Activated CD8-positive, alpha-beta T cell treated with anti-CD3 and anti-CD28 coated beads for 36 hours (primary cell): ENCODE measurements at regions of chr22 and their contacts with region 1.

Region 1: GRCh38 chr22:30289134-30289979 is at the start of gene CASTOR1:
- DNase-seq: peak; percentile 90
- ATAC-seq: peak; percentile 86
- H3K4me3 Mint-ChIP-seq: peak within 1 kb of the TSS; percentile 76
- H3K27ac Mint-ChIP-seq: peak within 1 kb of the TSS; percentile 76
- H3K4me1 Mint-ChIP-seq: peaks cover 22% of the 10 kb centered on the region
- H3K27me3 Mint-ChIP-seq: no peaks in the 10 kb centered on the region
- CTCF ChIP-seq: no peak
- total RNA-seq, gene CASTOR1: 4.2 to 5.1 TPM

Region 2: DNA sequence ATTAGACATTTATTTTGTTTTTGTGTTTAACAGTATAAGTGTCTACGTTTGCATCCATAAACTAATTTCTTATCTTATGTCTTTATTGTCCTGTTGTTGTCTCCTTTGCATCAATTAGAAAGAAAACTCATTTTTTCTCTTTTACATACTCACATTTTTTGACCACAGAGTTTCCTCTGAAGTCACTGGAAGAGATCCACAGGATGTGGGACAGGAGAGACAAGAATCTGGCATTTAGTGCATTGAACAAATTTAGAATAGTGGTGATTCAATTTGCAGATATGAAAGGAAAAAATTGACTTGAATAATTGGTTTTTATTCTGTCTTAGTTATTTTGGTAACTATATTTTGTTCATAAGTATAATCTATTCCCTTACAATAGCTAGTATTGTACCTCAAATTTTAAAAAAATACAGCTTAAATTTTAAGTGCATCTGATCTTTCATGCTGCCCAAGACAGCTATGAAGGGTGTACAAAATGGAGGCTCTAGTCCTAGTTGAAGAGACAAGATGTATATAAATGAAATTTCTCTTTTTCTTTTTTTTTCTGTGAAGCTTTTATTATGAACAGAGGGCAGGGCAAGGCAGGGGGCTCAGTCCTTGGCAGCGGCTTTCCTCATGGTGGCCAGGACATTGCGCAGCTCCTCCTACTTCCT is 184.7 kb before region 1 on chr22:
- CTCF ChIA-PET with region 1: interaction called, 103 read pairs
- POLR2A ChIA-PET with region 1: interaction called, 3 read pairs
- intact Hi-C with region 1: loop called (anchors 10 kb)
- DNase-seq: peak; percentile 22
- ATAC-seq: peak; percentile 75
- H3K4me3 Mint-ChIP-seq: no peak overlapping the region
- H3K27ac Mint-ChIP-seq: peak overlapping the region; percentile 81
- H3K4me1 Mint-ChIP-seq: peaks cover 33% of the 10 kb centered on the region
- H3K27me3 Mint-ChIP-seq: peaks cover 3% of the 10 kb centered on the region
- CTCF ChIP-seq: no peak

Region 3: GRCh38 chr22:30196141-30196879 is 93.0 kb before region 1 on chr22:
- CTCF ChIA-PET with region 1: no interaction called
- POLR2A ChIA-PET with region 1: no interaction called
- intact Hi-C with region 1: no loop called
- DNase-seq: peak; percentile 82
- ATAC-seq: peak; percentile 88
- H3K4me3 Mint-ChIP-seq: peak overlapping the region; percentile 28
- H3K27ac Mint-ChIP-seq: peak overlapping the region; percentile 89
- H3K4me1 Mint-ChIP-seq: peaks cover 60% of the 10 kb centered on the region
- H3K27me3 Mint-ChIP-seq: no peaks in the 10 kb centered on the region
- CTCF ChIP-seq: no peak

Region 4: DNA sequence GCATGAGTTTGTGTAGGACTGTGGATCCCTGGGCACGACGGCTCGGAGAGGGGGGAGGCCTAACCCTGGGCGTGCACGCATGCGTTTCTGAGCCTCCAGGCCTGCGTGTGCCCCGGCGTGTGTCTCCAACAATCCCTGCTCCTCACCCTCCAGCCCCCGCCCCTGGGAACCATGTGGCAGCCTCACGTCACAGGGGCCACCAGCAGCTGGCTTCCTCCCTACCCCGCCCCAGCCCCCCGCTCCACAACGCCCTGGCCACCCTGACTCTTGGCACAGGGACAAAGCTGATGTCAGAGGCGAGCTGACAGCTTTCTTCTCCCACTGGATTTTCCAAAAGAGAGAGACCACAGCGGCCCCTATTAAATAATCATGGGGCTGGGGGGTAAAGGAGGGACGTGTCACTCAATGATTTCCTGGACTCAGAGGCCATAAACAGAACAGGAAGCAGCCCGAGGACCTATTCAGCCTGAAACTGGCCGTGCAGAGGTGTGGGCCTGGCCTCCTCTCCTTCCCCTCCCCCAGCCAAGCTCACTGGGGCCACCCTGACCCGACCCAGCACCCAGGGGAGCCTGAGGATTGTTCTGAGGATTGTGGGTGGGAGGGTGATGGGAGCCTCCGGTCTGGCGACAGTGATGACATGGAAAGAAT is 36.0 kb before region 1 on chr22:
- CTCF ChIA-PET with region 1: interaction called, 36 read pairs
- POLR2A ChIA-PET with region 1: interaction called, 3 read pairs
- intact Hi-C with region 1: no loop called
- DNase-seq: no peak
- ATAC-seq: no peak
- H3K4me3 Mint-ChIP-seq: no peak overlapping the region
- H3K27ac Mint-ChIP-seq: no peak overlapping the region
- H3K4me1 Mint-ChIP-seq: peaks cover 46% of the 10 kb centered on the region
- H3K27me3 Mint-ChIP-seq: peaks cover 3% of the 10 kb centered on the region
- CTCF ChIP-seq: no peak

Region 5: DNA sequence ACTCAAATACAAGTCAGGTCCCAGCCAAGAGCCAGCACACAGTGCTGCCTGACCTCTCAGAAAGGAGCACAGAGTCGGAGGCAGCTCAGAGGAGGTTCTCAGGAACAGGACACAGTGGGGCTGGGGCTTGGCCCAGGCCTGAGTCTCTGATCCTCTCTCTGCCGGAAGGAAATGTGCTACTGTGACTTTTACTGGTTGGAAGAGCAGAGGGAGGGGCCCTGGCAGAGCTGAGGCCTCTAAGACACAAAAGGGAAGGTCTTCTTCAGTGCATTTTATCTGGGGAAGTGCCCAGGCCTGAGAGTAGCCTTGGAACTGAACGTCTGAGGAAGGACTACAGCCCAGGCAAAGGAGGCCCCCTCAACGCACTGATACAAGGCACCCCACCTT is 16.2 kb after region 1 on chr22:
- CTCF ChIA-PET with region 1: interaction called, 81 read pairs
- POLR2A ChIA-PET with region 1: interaction called, 22 read pairs
- intact Hi-C with region 1: no loop called
- DNase-seq: peak; percentile 72
- ATAC-seq: peak; percentile 76
- H3K4me3 Mint-ChIP-seq: peak overlapping the region; percentile 67
- H3K27ac Mint-ChIP-seq: peak overlapping the region; percentile 96
- H3K4me1 Mint-ChIP-seq: peaks cover 95% of the 10 kb centered on the region
- H3K27me3 Mint-ChIP-seq: no peaks in the 10 kb centered on the region
- CTCF ChIP-seq: no peak

Region 6: DNA sequence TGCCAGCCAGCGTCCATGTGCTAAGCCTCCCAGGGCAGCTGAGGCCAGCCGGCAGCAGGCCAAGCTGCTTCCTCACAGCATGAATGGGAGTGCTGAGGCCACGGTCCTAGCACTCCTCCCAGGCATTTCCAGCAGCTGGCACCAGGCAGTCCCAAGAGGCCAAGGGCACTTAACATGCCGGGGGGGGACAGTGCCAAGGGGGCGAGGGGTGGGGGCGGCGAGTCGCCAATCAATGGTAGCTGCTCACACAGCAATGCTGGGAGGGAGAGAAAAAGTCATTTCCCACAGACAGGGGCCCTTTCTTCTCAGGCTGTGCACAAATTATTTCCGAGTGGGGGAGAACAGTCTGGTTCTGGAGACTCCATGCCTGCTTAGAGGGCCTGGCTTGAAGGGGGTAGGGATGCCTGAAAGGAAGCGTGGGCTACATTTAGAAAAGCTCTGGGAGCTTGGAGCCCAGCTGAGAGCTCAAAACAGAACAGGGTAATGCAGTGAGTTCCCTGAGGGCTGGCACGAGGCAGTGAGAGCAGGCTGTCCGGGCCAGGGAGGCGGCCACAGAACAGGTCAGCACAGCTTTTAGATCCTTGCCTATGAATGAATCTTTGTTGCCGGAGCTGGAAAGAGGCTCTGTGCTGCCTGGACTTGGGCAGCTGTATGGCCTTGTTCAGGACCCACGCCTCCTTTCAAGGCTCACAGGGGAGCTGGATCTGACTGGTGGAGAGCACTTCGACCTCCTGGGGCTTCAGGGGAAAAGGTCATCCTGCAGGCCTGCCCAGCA is 51.7 kb after region 1 on chr22:
- CTCF ChIA-PET with region 1: interaction called, 13 read pairs
- POLR2A ChIA-PET with region 1: interaction called, 3 read pairs
- intact Hi-C with region 1: no loop called
- DNase-seq: no peak
- ATAC-seq: no peak
- H3K4me3 Mint-ChIP-seq: no peak overlapping the region
- H3K27ac Mint-ChIP-seq: no peak overlapping the region
- H3K4me1 Mint-ChIP-seq: peaks cover 5% of the 10 kb centered on the region
- H3K27me3 Mint-ChIP-seq: no peaks in the 10 kb centered on the region
- CTCF ChIP-seq: no peak

Region 7: DNA sequence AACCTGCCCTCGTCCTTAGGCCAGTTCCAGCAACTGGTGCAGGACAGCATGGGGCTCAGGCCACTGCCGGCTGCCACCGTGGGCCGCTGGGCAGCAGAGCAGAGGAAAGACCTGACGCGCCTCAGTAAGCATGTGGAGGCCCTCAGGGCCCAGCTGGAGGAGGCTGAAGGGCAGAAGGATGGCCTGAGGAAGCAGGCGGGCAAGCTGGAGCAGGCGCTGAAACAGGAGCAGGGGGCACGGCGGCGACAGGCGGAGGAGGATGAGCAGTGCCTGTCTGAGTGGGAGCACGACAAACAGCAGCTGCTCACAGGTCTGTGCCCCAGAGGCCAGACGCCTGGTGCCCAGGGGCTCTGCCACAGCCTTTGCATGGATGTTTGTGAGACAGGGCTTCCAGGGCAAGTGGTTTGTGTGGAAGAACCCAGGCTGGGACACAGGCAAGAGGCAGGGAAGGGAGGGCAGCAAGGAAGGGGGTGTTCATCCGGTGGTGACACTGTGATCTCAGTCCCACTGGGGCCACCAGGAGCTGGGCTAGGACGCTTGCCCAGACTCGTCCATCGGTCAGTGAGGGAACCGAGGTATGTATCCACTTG is 81.4 kb after region 1 on chr22:
- CTCF ChIA-PET with region 1: interaction called, 19 read pairs
- POLR2A ChIA-PET with region 1: interaction called, 3 read pairs
- intact Hi-C with region 1: no loop called
- DNase-seq: no peak
- ATAC-seq: no peak
- H3K4me3 Mint-ChIP-seq: no peak overlapping the region
- H3K27ac Mint-ChIP-seq: no peak overlapping the region
- H3K4me1 Mint-ChIP-seq: no peaks in the 10 kb centered on the region
- H3K27me3 Mint-ChIP-seq: no peaks in the 10 kb centered on the region
- CTCF ChIP-seq: no peak

Region 8: DNA sequence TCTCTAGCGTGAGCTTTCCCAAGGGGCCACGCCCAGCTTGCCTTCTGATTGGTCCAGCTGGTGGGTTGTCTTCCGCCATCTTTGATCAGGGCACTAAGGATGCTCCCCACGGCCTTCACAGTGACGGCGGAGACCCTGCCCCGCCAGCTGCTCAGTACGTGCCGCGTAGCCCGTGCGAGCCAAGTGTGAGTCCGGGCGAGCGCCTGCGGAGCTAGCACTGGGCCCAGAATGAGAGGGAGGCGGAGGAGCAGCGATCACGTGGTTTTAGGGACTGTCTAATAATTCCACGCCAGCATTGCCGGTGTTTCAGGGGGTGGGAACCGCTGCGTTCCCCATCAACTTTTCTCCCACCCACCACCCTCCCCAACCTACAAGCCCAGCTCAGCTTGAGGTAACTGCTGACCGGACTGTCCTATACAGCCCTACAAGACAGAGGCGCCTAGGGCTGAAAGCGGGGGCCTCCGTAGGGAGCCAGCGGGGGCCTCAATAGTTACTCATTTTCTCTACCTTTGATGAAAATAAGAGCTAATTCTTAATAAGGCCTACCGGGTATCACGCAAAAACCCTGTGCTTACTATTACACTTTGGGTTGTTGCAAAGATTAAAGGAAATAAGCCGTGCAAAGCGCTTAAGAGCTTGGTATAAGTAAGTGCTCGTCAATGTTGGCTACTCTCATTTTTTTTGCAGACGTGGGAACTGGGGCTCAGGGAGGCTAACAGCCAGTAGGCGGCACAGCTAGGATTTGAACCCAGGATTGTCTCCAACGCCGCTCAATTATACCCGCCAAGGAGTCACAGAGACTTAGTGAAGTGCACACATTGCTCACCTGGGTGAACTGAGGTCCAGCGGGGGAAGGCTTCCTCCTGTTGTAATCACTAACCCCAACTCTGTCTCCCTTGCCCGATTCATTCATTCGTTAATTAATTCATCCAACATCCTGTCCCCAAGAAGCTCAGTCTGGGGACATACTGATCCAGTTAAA is 134.9 kb after region 1 on chr22:
- CTCF ChIA-PET with region 1: interaction called, 27 read pairs
- POLR2A ChIA-PET with region 1: interaction called, 12 read pairs
- intact Hi-C with region 1: no loop called
- DNase-seq: peak; percentile 99
- ATAC-seq: peak; percentile 79
- H3K4me3 Mint-ChIP-seq: peak overlapping the region; percentile 93
- H3K27ac Mint-ChIP-seq: peak overlapping the region; percentile 96
- H3K4me1 Mint-ChIP-seq: peaks cover 42% of the 10 kb centered on the region
- H3K27me3 Mint-ChIP-seq: no peaks in the 10 kb centered on the region
- CTCF ChIP-seq: no peak

Region 9: DNA sequence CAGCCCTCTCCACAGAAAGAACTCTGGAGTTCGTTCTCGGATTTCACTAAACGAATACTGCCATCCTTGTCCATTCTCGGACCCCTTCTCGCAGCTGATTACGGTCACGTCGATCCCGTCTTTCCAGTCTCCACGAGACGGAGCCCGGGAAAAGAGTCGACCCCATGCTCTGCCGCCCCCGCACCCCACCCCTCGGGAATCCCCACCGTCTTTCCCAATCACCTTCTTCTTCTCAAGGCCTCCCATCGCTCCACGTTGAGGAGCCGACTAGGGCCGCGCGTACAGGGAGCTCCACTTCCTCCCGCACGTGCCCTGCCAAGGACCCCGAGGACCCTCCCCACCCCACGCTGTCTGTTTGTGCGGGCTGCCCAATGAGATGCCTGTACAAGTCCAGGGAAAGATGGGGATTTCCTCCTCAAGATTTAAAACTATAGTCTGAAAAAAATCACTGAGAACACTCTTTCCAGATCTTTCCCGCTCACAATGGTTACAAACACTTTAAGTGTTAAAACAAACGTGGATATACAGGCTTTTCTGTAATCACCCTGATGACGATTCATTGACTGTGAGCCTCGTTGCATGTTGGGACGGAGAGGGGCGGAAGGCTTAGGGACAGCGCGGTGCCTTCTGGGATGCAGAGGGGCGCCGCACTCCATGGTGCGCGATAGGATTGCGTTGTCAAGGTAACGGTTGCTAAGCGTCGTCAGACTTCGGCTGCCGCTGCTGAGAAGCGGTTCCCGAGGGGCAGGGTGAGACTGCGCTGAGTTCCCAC is 302.4 kb after region 1 on chr22 and contains the start of gene PES1:
- CTCF ChIA-PET with region 1: no interaction called
- POLR2A ChIA-PET with region 1: no interaction called
- intact Hi-C with region 1: no loop called
- DNase-seq: peak; percentile 97
- ATAC-seq: peak; percentile 100
- H3K4me3 Mint-ChIP-seq: no peak within 1 kb of the TSS
- H3K27ac Mint-ChIP-seq: no peak within 1 kb of the TSS
- H3K4me1 Mint-ChIP-seq: peaks cover 15% of the 10 kb centered on the region
- H3K27me3 Mint-ChIP-seq: peaks cover 2% of the 10 kb centered on the region
- CTCF ChIP-seq: no peak
- total RNA-seq, gene PES1: 123 to 131 TPM